Activated CD8-positive, alpha-beta T cell treated with anti-CD3 and anti-CD28 coated beads, Interleukin-2, amount 10 ng/mL, durations not matched to agents 7 days and 5 days (primary cell): ENCODE measurements at regions of chr10 and their contacts with region 1.

Region 1: GRCh38 chr10:92848441-92849233 is at the start of gene EXOC6:
- DNase-seq: peak; percentile 89
- ATAC-seq: peak; percentile 92
- H3K4me3 Mint-ChIP-seq: peak within 1 kb of the TSS; percentile 81
- H3K27ac Mint-ChIP-seq: peak within 1 kb of the TSS; percentile 87
- H3K4me1 Mint-ChIP-seq: peaks cover 30% of the 10 kb centered on the region
- H3K27me3 Mint-ChIP-seq: no peaks in the 10 kb centered on the region
- total RNA-seq, gene EXOC6: 11.7 to 12.5 TPM

Region 2: GRCh38 chr10:92876509-92877036 is 27.9 kb after region 1 on chr10:
- CTCF ChIA-PET with region 1: interaction called, 15 read pairs
- POLR2A ChIA-PET with region 1: interaction called, 5 read pairs
- DNase-seq: no peak
- ATAC-seq: no peak
- H3K4me3 Mint-ChIP-seq: no peak overlapping the region
- H3K27ac Mint-ChIP-seq: no peak overlapping the region
- H3K4me1 Mint-ChIP-seq: peaks cover 18% of the 10 kb centered on the region
- H3K27me3 Mint-ChIP-seq: no peaks in the 10 kb centered on the region

Region 3: GRCh38 chr10:92937876-92938275 is 89.2 kb after region 1 on chr10:
- CTCF ChIA-PET with region 1: no interaction called
- POLR2A ChIA-PET with region 1: no interaction called
- DNase-seq: no peak
- ATAC-seq: no peak
- H3K4me3 Mint-ChIP-seq: no peak overlapping the region
- H3K27ac Mint-ChIP-seq: no peak overlapping the region
- H3K4me1 Mint-ChIP-seq: no peaks in the 10 kb centered on the region
- H3K27me3 Mint-ChIP-seq: no peaks in the 10 kb centered on the region

Region 4: GRCh38 chr10:93058139-93058538 is 209.5 kb after region 1 on chr10:
- CTCF ChIA-PET with region 1: no interaction called
- POLR2A ChIA-PET with region 1: no interaction called
- DNase-seq: no peak
- ATAC-seq: no peak
- H3K4me3 Mint-ChIP-seq: no peak overlapping the region
- H3K27ac Mint-ChIP-seq: no peak overlapping the region
- H3K4me1 Mint-ChIP-seq: peaks cover 11% of the 10 kb centered on the region
- H3K27me3 Mint-ChIP-seq: peaks cover 11% of the 10 kb centered on the region